ENCODE measurements at regions of chr4 and their contacts with region 1.

Region 1: DNA sequence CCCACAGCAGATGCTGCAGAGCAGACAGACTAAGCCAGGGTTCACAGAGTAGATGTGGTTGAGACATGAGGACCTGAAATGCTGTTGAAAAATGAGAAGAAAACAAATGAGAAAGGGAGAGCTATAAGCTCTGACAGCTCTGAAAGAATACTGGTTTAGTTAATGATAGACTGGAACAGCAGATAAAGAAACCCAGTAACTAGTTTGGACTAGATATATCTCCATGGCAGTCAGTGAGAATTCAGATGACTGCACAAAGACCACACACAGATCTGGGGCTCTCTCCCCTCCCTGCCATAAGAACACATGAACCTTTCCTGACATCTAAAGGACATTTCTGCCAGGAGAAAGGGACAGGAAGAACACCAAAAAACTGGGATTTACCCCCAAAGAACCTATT is 8.2 kb downstream of the NAA11 start:
- DNase-seq: peak in 1 of 4 experiments; percentile 24
- ATAC-seq: peak; percentile 51
- H3K4me3 ChIP-seq: no peak overlapping the region
- H3K27ac ChIP-seq: peak overlapping the region; percentile 46; the same call in 1 of the 3 replicates
- H3K4me1 ChIP-seq: peaks cover 0 to 5% of the 10 kb centered on the region in 2 experiments; a peak in 2 of 5 replicates
- H3K27me3 ChIP-seq: no peaks in the 10 kb centered on the region
- CTCF ChIP-seq: no peak
- EP300 ChIP-seq: no peak
- POLR2A ChIP-seq: no peak
- RAD21 ChIP-seq: no peak

Region 2: GRCh38 chr4:78951862-78952472 is 365.7 kb before region 1 on chr4:
- CTCF ChIA-PET with region 1: no interaction called
- POLR2A ChIA-PET with region 1: no interaction called
- in situ Hi-C with region 1: no loop called
- intact Hi-C with region 1: loop called (anchors 5 kb)
- DNase-seq: peak; percentile 56 to 70 (median 58)
- ATAC-seq: peak; percentile 86
- H3K4me3 ChIP-seq: no peak overlapping the region
- H3K27ac ChIP-seq: no peak overlapping the region
- H3K4me1 ChIP-seq: peaks cover 0 to 4% of the 10 kb centered on the region in 2 experiments; a peak in 1 of 5 replicates
- H3K27me3 ChIP-seq: no peaks in the 10 kb centered on the region
- CTCF ChIP-seq: peak; percentile 58 to 84 (median 73)
- EP300 ChIP-seq: no peak
- POLR2A ChIP-seq: no peak
- RAD21 ChIP-seq: peak; percentile 76 to 91

Region 3: GRCh38 chr4:79209822-79210635 is 107.7 kb before region 1 on chr4:
- CTCF ChIA-PET with region 1: no interaction called
- POLR2A ChIA-PET with region 1: no interaction called
- in situ Hi-C with region 1: no loop called
- intact Hi-C with region 1: loop called (anchors 5 kb)
- DNase-seq: peak; percentile 29 to 97 (median 55)
- ATAC-seq: peak; percentile 76
- H3K4me3 ChIP-seq: peak overlapping the region; percentile 42
- H3K27ac ChIP-seq: peak overlapping the region; percentile 95
- H3K4me1 ChIP-seq: peaks cover 4 to 32% of the 10 kb centered on the region in 2 experiments; a peak in 3 of 5 replicates
- H3K27me3 ChIP-seq: no peaks in the 10 kb centered on the region
- CTCF ChIP-seq: no peak
- EP300 ChIP-seq: peak; percentile 99
- POLR2A ChIP-seq: peak; percentile 80
- RAD21 ChIP-seq: no peak; a peak in 1 of 4 replicates

Region 4: GRCh38 chr4:79232540-79232939 is 85.2 kb before region 1 on chr4:
- CTCF ChIA-PET with region 1: no interaction called
- POLR2A ChIA-PET with region 1: no interaction called
- in situ Hi-C with region 1: no loop called
- intact Hi-C with region 1: no loop called
- DNase-seq: no peak
- ATAC-seq: no peak; the same call in 2 of the 3 replicates
- H3K4me3 ChIP-seq: no peak overlapping the region
- H3K27ac ChIP-seq: no peak overlapping the region
- H3K4me1 ChIP-seq: peaks cover 3 to 15% of the 10 kb centered on the region in 2 experiments; a peak in 2 of 5 replicates
- H3K27me3 ChIP-seq: no peaks in the 10 kb centered on the region
- CTCF ChIP-seq: no peak
- EP300 ChIP-seq: no peak
- POLR2A ChIP-seq: no peak
- RAD21 ChIP-seq: no peak

Region 5: GRCh38 chr4:79492148-79492547 is 174.4 kb after region 1 on chr4:
- CTCF ChIA-PET with region 1: no interaction called
- POLR2A ChIA-PET with region 1: no interaction called
- in situ Hi-C with region 1: no loop called
- intact Hi-C with region 1: no loop called
- DNase-seq: no peak
- ATAC-seq: no peak; the same call in 2 of the 3 replicates
- H3K4me3 ChIP-seq: no peak overlapping the region
- H3K27ac ChIP-seq: no peak overlapping the region
- H3K4me1 ChIP-seq: no peaks in the 10 kb centered on the region; a peak in 2 of 5 replicates
- H3K27me3 ChIP-seq: no peaks in the 10 kb centered on the region
- CTCF ChIP-seq: no peak
- EP300 ChIP-seq: no peak
- POLR2A ChIP-seq: no peak
- RAD21 ChIP-seq: no peak

Region 6: DNA sequence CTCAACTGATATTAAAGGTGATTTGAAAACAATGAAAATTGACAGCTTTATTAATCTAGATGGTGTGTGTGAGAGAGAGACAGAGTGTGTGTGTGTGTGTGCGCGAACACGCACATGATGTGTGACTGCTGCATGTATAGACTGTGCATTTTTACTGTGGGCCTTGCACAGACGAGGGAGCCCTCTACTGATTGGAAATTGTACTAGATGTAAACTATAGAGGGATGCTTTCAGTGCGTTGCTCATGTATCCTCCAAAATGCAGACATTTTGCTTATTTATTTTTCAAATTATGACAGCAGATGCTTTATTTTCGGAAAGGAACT is 258.7 kb after region 1 on chr4:
- CTCF ChIA-PET with region 1: no interaction called
- POLR2A ChIA-PET with region 1: no interaction called
- in situ Hi-C with region 1: no loop called
- intact Hi-C with region 1: loop called (anchors 2 kb)
- DNase-seq: peak in 3 of 4 experiments; percentile 11 to 61 (median 27)
- ATAC-seq: peak; percentile 94
- H3K4me3 ChIP-seq: no peak overlapping the region
- H3K27ac ChIP-seq: no peak overlapping the region
- H3K4me1 ChIP-seq: no peaks in the 10 kb centered on the region; a peak in 2 of 5 replicates
- H3K27me3 ChIP-seq: no peaks in the 10 kb centered on the region
- CTCF ChIP-seq: peak; percentile 50 to 72 (median 62); a peak in 5 of 6 replicates
- EP300 ChIP-seq: no peak
- POLR2A ChIP-seq: no peak
- RAD21 ChIP-seq: peak; percentile 75 to 84